CD4-positive, alpha-beta T cell (primary cell): ENCODE measurements at regions of chr9 and their contacts with region 1.

Region 1: DNA sequence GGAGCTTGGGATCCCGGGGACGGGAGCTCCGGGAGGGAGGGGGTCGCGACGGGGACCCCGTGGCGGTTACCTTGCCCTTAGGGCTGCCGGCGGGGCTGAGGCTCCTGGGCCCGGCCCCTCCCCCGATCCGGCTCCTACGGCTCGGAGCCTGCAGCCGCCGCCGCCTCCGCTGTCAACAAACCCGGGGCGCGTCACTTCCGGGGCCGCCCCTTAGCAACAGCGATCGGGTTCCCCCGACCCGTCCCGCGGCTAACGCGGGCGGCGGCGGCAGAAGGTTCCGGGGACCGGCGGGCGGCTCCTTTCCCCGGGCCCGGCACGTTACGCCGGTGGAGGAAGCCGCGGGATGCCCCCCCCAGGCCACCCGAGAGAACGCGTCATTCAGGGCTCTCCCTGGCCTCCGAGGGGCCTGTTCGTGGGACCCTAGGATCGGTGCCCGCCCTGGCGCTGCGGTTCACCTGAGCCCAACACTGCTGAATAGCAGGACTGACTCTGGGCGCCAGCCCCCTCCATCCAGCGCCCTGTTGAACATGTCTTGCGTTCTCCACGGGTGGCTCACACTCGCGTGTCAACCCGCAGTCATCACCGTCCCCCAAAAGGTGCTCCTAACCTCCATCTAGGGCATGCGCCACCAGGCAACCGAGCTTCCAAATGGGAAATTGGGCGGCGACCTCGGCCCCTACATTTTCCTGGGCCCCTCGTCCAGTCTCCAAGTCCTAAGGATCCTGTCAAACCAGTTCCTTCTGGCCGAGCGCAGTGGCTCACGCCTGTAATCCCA is at the start of gene ZER1:
- DNase-seq: peak; percentile 88 to 97 (median 94)
- ATAC-seq: peak; percentile 85
- H3K4me3 ChIP-seq: peak within 1 kb of the TSS; percentile 95
- H3K4me3 Mint-ChIP-seq: peak within 1 kb of the TSS; percentile 98
- H3K27ac ChIP-seq: peak within 1 kb of the TSS; percentile 82 to 83
- H3K27ac Mint-ChIP-seq: peak within 1 kb of the TSS; percentile 98
- H3K4me1 ChIP-seq: peaks cover 25% of the 10 kb centered on the region
- H3K4me1 Mint-ChIP-seq: peaks cover 39% of the 10 kb centered on the region
- H3K27me3 ChIP-seq: no peaks in the 10 kb centered on the region
- H3K27me3 Mint-ChIP-seq: no peaks in the 10 kb centered on the region
- CTCF ChIP-seq: no peak
- total RNA-seq, gene ZER1: 25.4 to 32.6 TPM

Region 2: GRCh38 chr9:128656416-128657343 is 115.3 kb before region 1 on chr9 and contains the start of gene DYNC2I2:
- CTCF ChIA-PET with region 1: no interaction called
- POLR2A ChIA-PET with region 1: interaction called, 5 read pairs
- intact Hi-C with region 1: loop called in 1 of 2 experiments (anchors 5 kb)
- DNase-seq: peak; percentile 94 to 99 (median 96)
- ATAC-seq: peak; percentile 98
- H3K4me3 ChIP-seq: peak within 1 kb of the TSS; percentile 64
- H3K4me3 Mint-ChIP-seq: peak within 1 kb of the TSS; percentile 96
- H3K27ac ChIP-seq: peak within 1 kb of the TSS; percentile 94 to 96
- H3K27ac Mint-ChIP-seq: peak within 1 kb of the TSS; percentile 95
- H3K4me1 ChIP-seq: peaks cover 13% of the 10 kb centered on the region
- H3K4me1 Mint-ChIP-seq: peaks cover 8% of the 10 kb centered on the region
- H3K27me3 ChIP-seq: no peaks in the 10 kb centered on the region
- H3K27me3 Mint-ChIP-seq: no peaks in the 10 kb centered on the region
- CTCF ChIP-seq: no peak
- total RNA-seq, gene DYNC2I2: 2.2 to 3.2 TPM

Region 3: DNA sequence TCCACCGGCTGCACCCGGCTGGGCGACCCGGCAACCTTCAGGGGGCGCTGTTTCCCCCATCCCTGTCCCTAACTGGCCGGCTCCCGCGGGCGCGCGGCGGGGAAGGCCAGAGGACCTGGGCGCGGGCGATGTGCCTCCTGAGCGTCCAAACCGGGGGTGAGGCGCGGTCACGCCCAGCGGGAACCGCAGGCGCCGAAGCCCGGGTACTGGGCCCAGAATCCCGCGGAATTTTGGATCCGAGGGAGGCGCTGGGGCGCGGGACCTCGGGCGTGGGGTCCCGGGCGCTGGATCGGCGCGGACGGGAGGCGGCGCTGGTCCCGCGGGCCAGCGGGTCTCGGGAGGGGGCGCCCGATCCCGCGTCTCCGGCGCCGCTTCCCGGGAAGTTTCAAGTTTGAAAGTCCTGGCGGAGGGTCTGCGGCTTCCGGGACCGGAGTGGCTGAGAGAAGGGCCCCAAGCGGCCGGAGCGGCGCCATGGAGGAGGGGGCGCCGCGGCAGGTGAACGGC is 69.4 kb before region 1 on chr9 and contains the start of gene PKN3:
- CTCF ChIA-PET with region 1: no interaction called
- POLR2A ChIA-PET with region 1: no interaction called
- intact Hi-C with region 1: loop called in 1 of 2 experiments (anchors 5 kb)
- DNase-seq: peak; percentile 73 to 91 (median 83)
- ATAC-seq: peak; percentile 84
- H3K4me3 ChIP-seq: peak within 1 kb of the TSS; percentile 56
- H3K4me3 Mint-ChIP-seq: peak within 1 kb of the TSS; percentile 91
- H3K27ac ChIP-seq: no peak within 1 kb of the TSS
- H3K27ac Mint-ChIP-seq: peak within 1 kb of the TSS; percentile 24
- H3K4me1 ChIP-seq: peaks cover 20% of the 10 kb centered on the region
- H3K4me1 Mint-ChIP-seq: peaks cover 11% of the 10 kb centered on the region
- H3K27me3 ChIP-seq: no peaks in the 10 kb centered on the region
- H3K27me3 Mint-ChIP-seq: no peaks in the 10 kb centered on the region
- CTCF ChIP-seq: peak; percentile 92
- total RNA-seq, gene PKN3: 0.95 to 1.9 TPM

Region 4: GRCh38 chr9:128786681-128787601 is 15.0 kb after region 1 on chr9 and contains the start of gene TBC1D13:
- CTCF ChIA-PET with region 1: no interaction called
- POLR2A ChIA-PET with region 1: interaction called, 49 read pairs
- intact Hi-C with region 1: loop called (anchors 1 kb)
- DNase-seq: peak; percentile 82 to 95 (median 87)
- ATAC-seq: peak; percentile 92
- H3K4me3 ChIP-seq: peak within 1 kb of the TSS; percentile 79
- H3K4me3 Mint-ChIP-seq: peak within 1 kb of the TSS; percentile 96
- H3K27ac ChIP-seq: peak within 1 kb of the TSS; percentile 67 to 77
- H3K27ac Mint-ChIP-seq: peak within 1 kb of the TSS; percentile 99
- H3K4me1 ChIP-seq: peaks cover 23% of the 10 kb centered on the region
- H3K4me1 Mint-ChIP-seq: peaks cover 25% of the 10 kb centered on the region
- H3K27me3 ChIP-seq: no peaks in the 10 kb centered on the region
- H3K27me3 Mint-ChIP-seq: no peaks in the 10 kb centered on the region
- CTCF ChIP-seq: no peak
- total RNA-seq, gene TBC1D13: 25.4 to 28.7 TPM